ENCODE measurements at regions of chr3 and their contacts with region 1.

Region 1: DNA sequence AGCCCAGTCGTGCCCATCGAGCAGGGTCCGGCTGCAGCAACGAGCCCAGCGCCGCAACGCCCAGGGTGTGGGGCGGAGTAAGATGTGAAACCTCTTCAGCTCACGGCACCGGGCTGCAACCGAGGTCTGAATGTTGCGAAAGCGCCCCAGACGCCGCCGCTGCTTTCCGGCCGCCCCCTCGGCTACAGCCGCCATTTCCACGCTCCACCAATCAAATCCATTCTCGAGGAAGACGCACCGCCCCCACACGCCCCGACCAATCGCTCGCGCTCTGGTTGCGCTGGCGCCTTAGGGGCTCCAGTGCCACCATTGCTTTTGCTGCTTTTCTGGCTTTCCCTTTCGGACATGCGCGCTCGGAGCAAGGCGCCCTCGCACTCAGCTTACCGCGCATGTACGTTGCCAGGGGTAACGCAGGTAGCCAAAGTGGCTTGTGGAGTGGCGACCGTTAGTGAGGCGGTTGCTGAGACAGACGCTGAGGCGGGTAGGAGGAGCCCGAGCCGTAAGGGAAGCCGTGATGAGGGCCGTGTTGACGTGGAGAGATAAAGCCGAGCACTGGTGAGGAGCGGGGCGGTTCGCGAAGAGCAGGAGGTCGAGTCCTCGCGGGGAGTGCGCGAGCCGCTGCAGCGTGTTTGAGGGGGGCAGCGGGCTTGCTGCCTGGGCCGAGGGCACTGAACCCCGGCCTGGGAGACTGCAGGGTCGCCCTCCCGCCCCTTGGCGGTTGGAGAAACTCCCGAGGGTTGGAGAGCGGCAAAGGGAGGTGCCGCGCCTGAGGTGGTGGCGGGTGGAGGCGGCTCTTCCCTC is at the starts of genes IFT122 and MBD4:
- DNase-seq: peak; percentile 97 to 100 (median 98)
- ATAC-seq: peak; percentile 82
- H3K4me3 ChIP-seq: peak within 1 kb of the TSS; percentile 87 to 99
- H3K4me3 Mint-ChIP-seq: peak within 1 kb of the TSS; percentile 96
- H3K27ac ChIP-seq: peak within 1 kb of the TSS; percentile 92 to 93
- H3K27ac Mint-ChIP-seq: peak within 1 kb of the TSS; percentile 98
- H3K4me1 ChIP-seq: peaks cover 34% of the 10 kb centered on the region
- H3K4me1 Mint-ChIP-seq: peaks cover 70% of the 10 kb centered on the region
- H3K27me3 ChIP-seq: no peaks in the 10 kb centered on the region
- H3K27me3 Mint-ChIP-seq: no peaks in the 10 kb centered on the region
- CTCF ChIP-seq: no peak
- total RNA-seq, gene IFT122: 14.7 to 16.9 TPM
- total RNA-seq, gene MBD4: 48.5 to 51.8 TPM

Region 2: DNA sequence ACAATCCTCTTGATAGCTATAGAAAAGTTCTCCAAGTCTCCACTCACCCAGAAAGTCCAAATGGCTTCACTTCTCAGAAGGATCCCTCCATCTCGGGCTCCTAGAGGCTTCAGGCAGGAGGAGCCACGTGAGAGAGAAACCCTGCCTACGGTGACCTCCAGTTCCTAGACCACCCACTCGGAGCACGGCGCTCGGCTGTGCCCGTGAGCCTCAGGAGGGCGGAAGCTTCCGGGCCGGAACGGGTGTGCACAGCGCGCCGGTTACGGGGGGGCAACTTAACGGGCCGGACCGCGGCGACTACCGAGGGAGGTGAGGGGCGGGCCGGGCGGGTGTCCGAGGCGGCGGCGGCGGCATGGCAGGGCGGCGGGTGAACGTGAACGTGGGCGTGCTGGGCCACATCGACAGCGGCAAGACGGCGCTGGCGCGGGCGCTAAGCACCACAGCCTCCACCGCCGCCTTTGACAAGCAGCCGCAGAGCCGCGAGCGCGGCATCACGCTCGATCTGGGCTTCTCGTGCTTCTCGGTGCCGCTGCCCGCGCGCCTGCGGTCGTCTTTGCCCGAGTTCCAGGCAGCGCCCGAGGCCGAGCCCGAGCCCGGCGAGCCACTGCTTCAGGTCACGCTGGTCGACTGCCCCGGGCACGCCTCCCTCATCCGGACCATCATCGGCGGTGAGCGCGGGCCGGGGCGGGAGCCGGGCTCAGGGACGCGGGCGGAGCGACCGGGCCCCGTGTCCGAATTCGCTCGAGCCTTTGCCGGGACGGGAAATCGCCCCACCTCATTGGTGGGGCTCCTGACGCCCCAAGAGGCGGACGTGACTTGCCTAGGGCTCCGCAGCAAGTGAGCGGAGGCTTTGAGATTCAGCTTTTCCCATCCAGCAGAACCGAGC is 1286.6 kb before region 1 on chr3 and contains the start of gene EEFSEC:
- CTCF ChIA-PET with region 1: no interaction called
- POLR2A ChIA-PET with region 1: no interaction called
- intact Hi-C with region 1: loop called in 1 of 2 experiments (anchors 5 kb)
- DNase-seq: peak; percentile 77 to 92 (median 84)
- ATAC-seq: peak; percentile 90
- H3K4me3 ChIP-seq: peak within 1 kb of the TSS; percentile 61 to 74
- H3K4me3 Mint-ChIP-seq: peak within 1 kb of the TSS; percentile 87
- H3K27ac ChIP-seq: peak within 1 kb of the TSS; percentile 65 to 77
- H3K27ac Mint-ChIP-seq: peak within 1 kb of the TSS; percentile 89
- H3K4me1 ChIP-seq: peaks cover 14% of the 10 kb centered on the region
- H3K4me1 Mint-ChIP-seq: peaks cover 42% of the 10 kb centered on the region
- H3K27me3 ChIP-seq: no peaks in the 10 kb centered on the region
- H3K27me3 Mint-ChIP-seq: no peaks in the 10 kb centered on the region
- CTCF ChIP-seq: no peak
- total RNA-seq, gene EEFSEC: 10.8 to 11.6 TPM

Region 3: GRCh38 chr3:129026728-129027543 is 413.1 kb before region 1 on chr3:
- CTCF ChIA-PET with region 1: no interaction called
- POLR2A ChIA-PET with region 1: no interaction called
- intact Hi-C with region 1: loop called in 1 of 2 experiments (anchors 5 kb)
- DNase-seq: peak; percentile 85 to 98 (median 91)
- ATAC-seq: peak; percentile 98
- H3K4me3 ChIP-seq: peak overlapping the region; percentile 58 to 61
- H3K4me3 Mint-ChIP-seq: peak overlapping the region; percentile 85
- H3K27ac ChIP-seq: peak overlapping the region; percentile 75 to 80
- H3K27ac Mint-ChIP-seq: peak overlapping the region; percentile 99
- H3K4me1 ChIP-seq: peaks cover 22% of the 10 kb centered on the region
- H3K4me1 Mint-ChIP-seq: peaks cover 26% of the 10 kb centered on the region
- H3K27me3 ChIP-seq: no peaks in the 10 kb centered on the region
- H3K27me3 Mint-ChIP-seq: no peaks in the 10 kb centered on the region
- CTCF ChIP-seq: peak; percentile 84

Region 4: DNA sequence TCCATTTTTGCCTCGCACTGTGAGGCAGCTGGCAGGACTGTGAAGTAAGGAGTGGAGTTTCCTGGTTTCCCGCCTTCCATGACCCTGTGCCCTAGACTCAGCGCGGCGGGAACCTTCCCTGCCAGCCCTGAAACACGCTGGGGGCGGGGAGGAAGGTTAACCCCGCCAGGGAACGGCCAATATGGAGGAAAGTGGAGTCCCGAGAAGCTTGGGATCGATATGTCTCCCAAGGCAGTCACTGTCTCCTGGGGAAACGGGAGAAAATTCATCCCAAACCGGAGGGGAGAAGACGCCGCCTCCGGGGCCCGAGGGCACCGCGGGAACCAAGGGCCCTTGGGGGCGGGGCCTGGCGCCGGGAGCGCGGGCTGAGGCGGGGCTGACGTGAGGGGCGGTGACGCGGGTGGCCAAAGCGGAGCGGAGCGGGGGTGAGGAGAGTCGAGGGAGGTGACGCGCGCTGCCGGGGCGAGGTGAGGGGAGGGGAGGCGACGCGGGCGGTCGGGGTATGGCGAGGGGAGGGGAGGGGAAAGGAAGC is 161.5 kb before region 1 on chr3 and contains the start of gene HMCES:
- CTCF ChIA-PET with region 1: no interaction called
- POLR2A ChIA-PET with region 1: interaction called, 4 read pairs
- intact Hi-C with region 1: loop called in 1 of 2 experiments (anchors 2 kb)
- DNase-seq: peak; percentile 88 to 98 (median 96)
- ATAC-seq: peak; percentile 94
- H3K4me3 ChIP-seq: peak within 1 kb of the TSS; percentile 59 to 92
- H3K4me3 Mint-ChIP-seq: peak within 1 kb of the TSS; percentile 95
- H3K27ac ChIP-seq: peak within 1 kb of the TSS; percentile 88 to 93
- H3K27ac Mint-ChIP-seq: peak within 1 kb of the TSS; percentile 97
- H3K4me1 ChIP-seq: peaks cover 39% of the 10 kb centered on the region
- H3K4me1 Mint-ChIP-seq: peaks cover 42% of the 10 kb centered on the region
- H3K27me3 ChIP-seq: no peaks in the 10 kb centered on the region
- H3K27me3 Mint-ChIP-seq: no peaks in the 10 kb centered on the region
- CTCF ChIP-seq: no peak
- total RNA-seq, gene HMCES: 69.5 to 78.7 TPM

Region 5: DNA sequence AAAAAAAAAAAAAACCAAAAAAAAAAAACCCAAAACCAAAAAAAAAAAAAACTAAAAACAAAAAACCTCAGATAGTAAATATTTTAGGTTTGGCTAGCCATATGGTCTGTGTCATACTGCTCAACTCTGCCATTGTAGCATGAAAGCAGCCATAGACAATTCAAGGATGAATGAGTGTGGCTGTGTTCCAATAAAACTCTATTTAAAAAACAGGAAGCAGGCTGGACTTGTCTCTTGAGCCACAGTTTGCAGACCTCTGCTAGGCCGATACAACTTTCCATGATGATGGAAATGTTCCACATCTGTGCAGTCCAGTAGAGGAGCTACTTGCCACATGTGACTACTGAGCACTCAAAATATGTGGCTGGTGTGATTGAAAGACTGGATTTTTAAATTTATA is 22.7 kb before region 1 on chr3:
- CTCF ChIA-PET with region 1: no interaction called
- POLR2A ChIA-PET with region 1: no interaction called
- intact Hi-C with region 1: no loop called
- DNase-seq: no peak
- ATAC-seq: no peak
- H3K4me3 ChIP-seq: no peak overlapping the region
- H3K4me3 Mint-ChIP-seq: no peak overlapping the region
- H3K27ac ChIP-seq: no peak overlapping the region
- H3K27ac Mint-ChIP-seq: no peak overlapping the region
- H3K4me1 ChIP-seq: no peaks in the 10 kb centered on the region
- H3K4me1 Mint-ChIP-seq: no peaks in the 10 kb centered on the region
- H3K27me3 ChIP-seq: no peaks in the 10 kb centered on the region
- H3K27me3 Mint-ChIP-seq: peaks cover 3% of the 10 kb centered on the region
- CTCF ChIP-seq: no peak

Region 6: GRCh38 chr3:129428376-129429079 is 11.5 kb before region 1 on chr3 and contains the start of gene EFCAB12:
- CTCF ChIA-PET with region 1: no interaction called
- POLR2A ChIA-PET with region 1: interaction called, 30 read pairs
- intact Hi-C with region 1: loop called (anchors 1 kb)
- DNase-seq: peak; percentile 76 to 93 (median 90)
- ATAC-seq: peak; percentile 94
- H3K4me3 ChIP-seq: peak within 1 kb of the TSS; percentile 45 to 58
- H3K4me3 Mint-ChIP-seq: peak within 1 kb of the TSS; percentile 85
- H3K27ac ChIP-seq: peak within 1 kb of the TSS; percentile 4 to 53
- H3K27ac Mint-ChIP-seq: peak within 1 kb of the TSS; percentile 84
- H3K4me1 ChIP-seq: peaks cover 12% of the 10 kb centered on the region
- H3K4me1 Mint-ChIP-seq: peaks cover 21% of the 10 kb centered on the region
- H3K27me3 ChIP-seq: no peaks in the 10 kb centered on the region
- H3K27me3 Mint-ChIP-seq: no peaks in the 10 kb centered on the region
- CTCF ChIP-seq: no peak
- total RNA-seq, gene EFCAB12: 2.3 to 3.1 TPM

Region 7: DNA sequence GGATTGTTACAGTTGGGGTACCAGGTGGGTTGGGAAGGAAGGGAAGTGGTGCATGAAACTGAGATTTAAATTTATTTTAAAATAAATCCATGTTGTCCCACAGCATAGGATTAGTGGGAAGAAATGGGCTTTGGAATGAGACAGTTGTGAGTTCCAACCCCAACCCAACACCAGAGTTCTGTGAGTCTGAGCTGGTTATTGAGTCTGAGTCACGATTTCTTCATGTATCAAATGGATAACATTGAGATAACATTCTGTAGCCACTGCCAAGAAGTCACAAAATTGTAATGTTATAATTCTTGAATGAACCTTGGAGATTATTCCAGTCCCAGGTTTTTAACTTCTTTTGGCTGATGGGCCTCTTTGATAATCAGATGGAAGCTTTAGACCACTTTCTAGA is 13.7 kb after region 1 on chr3:
- CTCF ChIA-PET with region 1: no interaction called
- POLR2A ChIA-PET with region 1: no interaction called
- intact Hi-C with region 1: no loop called
- DNase-seq: no peak
- ATAC-seq: no peak
- H3K4me3 ChIP-seq: no peak overlapping the region
- H3K4me3 Mint-ChIP-seq: no peak overlapping the region
- H3K27ac ChIP-seq: no peak overlapping the region
- H3K27ac Mint-ChIP-seq: no peak overlapping the region
- H3K4me1 ChIP-seq: no peaks in the 10 kb centered on the region
- H3K4me1 Mint-ChIP-seq: no peaks in the 10 kb centered on the region
- H3K27me3 ChIP-seq: no peaks in the 10 kb centered on the region
- H3K27me3 Mint-ChIP-seq: no peaks in the 10 kb centered on the region
- CTCF ChIP-seq: no peak

Region 8: DNA sequence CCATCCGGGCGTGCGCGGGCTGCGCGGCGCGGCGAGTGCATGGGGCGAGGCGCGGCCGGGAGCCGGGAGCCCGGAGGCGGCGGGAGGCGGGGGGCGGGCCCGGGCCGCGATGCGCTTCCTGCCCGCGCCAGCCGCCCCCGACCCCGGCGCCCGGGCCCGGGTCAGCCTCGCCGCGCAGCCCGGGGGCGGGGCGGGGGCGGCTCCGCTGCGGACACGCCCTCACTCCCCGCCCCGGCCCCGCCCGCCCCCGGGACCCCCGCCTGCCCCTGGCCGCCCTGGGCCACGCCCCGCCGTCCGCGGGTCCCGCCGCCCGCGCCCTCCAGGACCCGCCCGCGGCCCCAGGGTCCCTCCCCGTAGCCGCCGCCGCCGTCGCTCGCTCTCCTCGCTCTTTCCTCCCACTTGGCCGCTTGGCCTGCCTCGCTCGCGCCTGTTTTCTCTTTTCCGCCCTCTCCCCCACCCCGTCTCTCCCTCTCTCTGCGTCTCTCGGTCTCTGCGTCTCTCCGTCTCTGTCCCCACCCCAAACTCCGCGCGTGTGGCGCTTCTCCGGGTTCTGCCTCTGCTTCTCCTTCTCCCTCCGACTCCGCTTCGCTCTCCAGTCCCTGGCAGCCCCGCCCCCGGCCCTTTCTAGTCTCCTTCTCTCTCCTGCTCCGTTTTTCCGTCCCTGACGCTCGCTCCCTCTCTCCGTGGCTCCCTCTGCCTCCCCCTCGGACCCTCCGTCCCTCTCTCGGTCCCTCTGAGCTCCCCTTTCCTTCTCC is 166.8 kb after region 1 on chr3 and contains the start of gene PLXND1:
- CTCF ChIA-PET with region 1: no interaction called
- POLR2A ChIA-PET with region 1: interaction called, 4 read pairs
- intact Hi-C with region 1: loop called (anchors 5 kb)
- DNase-seq: peak in 7 of 9 experiments; percentile 22 to 77 (median 53)
- ATAC-seq: peak; percentile 66
- H3K4me3 ChIP-seq: peak within 1 kb of the TSS; percentile 49 to 59
- H3K4me3 Mint-ChIP-seq: peak within 1 kb of the TSS; percentile 96
- H3K27ac ChIP-seq: no peak within 1 kb of the TSS
- H3K27ac Mint-ChIP-seq: peak within 1 kb of the TSS; percentile 92
- H3K4me1 ChIP-seq: peaks cover 15% of the 10 kb centered on the region
- H3K4me1 Mint-ChIP-seq: peaks cover 25% of the 10 kb centered on the region
- H3K27me3 ChIP-seq: peaks cover 5 to 7% of the 10 kb centered on the region in 2 experiments
- H3K27me3 Mint-ChIP-seq: peaks cover 14% of the 10 kb centered on the region
- CTCF ChIP-seq: no peak
- total RNA-seq, gene PLXND1: 84.7 to 96.8 TPM

Measured in CD8-positive, alpha-beta T cell (primary cell).